Caco-2 (cell line): ENCODE measurements at regions of chr11 and their contacts with region 1.

Region 1: DNA sequence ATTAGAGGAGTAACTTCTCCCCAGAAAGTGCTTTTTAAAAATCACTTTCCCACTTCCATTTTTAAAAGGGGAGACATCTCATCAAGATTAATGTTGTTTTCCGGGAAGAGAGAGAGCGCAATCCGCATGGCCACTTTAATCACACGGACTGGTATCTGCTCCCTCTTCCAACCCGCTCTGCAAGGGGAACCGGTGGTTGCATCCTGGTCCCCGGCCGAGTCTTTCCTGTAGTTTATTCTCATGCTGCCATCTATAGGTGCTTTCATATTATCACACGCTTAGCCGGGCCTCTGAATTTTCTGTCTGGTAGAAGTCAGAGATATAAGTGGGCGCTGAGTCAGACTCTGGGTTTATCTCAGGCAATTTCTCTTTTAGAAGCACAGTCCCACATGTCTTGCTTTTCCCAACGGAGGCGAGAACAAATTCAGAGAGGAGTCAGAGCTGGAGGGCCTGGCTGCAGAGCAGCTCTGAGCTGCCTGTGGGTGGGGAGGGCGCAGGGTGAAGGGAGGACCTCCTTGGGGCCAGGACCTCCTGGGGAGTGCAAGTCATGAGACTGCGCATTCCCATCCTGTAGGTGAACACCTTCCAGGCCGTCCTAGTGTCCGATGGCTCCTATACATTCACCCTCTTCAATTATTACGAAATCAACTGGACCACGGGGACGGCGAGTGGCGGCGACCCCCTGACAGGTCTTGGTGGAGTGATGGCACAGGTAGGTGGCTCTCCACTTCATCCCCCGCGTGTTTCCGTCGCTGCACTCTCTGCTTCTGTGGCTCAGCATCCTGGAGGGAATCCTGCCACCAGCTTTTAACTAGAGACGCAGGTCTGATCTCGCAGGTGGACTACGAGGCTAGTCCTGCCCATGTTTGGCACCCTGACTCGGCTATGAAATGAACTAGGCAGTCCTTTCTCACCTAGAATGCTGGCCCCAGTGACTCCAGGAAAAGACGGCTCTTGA is 11.7 kb downstream of the TECTA start:
- DNase-seq: peak; percentile 78 to 80
- H3K4me3 ChIP-seq: no peak overlapping the region
- H3K4me3 Mint-ChIP-seq: no peak overlapping the region
- H3K27ac Mint-ChIP-seq: no peak overlapping the region
- H3K4me1 ChIP-seq: no peaks in the 10 kb centered on the region
- H3K4me1 Mint-ChIP-seq: no peaks in the 10 kb centered on the region
- H3K27me3 ChIP-seq: no peaks in the 10 kb centered on the region; the same call in 1 of the 2 replicates
- H3K27me3 Mint-ChIP-seq: peaks cover 14% of the 10 kb centered on the region
- CTCF ChIP-seq: peak; percentile 80 to 83

Region 2: GRCh38 chr11:120912504-120912903 is 200.3 kb before region 1 on chr11:
- CTCF ChIA-PET with region 1: no interaction called
- POLR2A ChIA-PET with region 1: no interaction called
- intact Hi-C with region 1: loop called (anchors 1 kb)
- DNase-seq: peak in 1 of 2 experiments; percentile 47
- H3K4me3 ChIP-seq: no peak overlapping the region
- H3K4me3 Mint-ChIP-seq: no peak overlapping the region
- H3K27ac Mint-ChIP-seq: no peak overlapping the region
- H3K4me1 ChIP-seq: peaks cover 4% of the 10 kb centered on the region; the same call in 1 of the 2 replicates
- H3K4me1 Mint-ChIP-seq: peaks cover 6% of the 10 kb centered on the region
- H3K27me3 ChIP-seq: 0 out of 2 replicates have a peak, but pooled peaks cover 3% of the 10 kb centered on the region
- H3K27me3 Mint-ChIP-seq: peaks cover 21% of the 10 kb centered on the region
- CTCF ChIP-seq: peak; percentile 62 to 78

Region 3: DNA sequence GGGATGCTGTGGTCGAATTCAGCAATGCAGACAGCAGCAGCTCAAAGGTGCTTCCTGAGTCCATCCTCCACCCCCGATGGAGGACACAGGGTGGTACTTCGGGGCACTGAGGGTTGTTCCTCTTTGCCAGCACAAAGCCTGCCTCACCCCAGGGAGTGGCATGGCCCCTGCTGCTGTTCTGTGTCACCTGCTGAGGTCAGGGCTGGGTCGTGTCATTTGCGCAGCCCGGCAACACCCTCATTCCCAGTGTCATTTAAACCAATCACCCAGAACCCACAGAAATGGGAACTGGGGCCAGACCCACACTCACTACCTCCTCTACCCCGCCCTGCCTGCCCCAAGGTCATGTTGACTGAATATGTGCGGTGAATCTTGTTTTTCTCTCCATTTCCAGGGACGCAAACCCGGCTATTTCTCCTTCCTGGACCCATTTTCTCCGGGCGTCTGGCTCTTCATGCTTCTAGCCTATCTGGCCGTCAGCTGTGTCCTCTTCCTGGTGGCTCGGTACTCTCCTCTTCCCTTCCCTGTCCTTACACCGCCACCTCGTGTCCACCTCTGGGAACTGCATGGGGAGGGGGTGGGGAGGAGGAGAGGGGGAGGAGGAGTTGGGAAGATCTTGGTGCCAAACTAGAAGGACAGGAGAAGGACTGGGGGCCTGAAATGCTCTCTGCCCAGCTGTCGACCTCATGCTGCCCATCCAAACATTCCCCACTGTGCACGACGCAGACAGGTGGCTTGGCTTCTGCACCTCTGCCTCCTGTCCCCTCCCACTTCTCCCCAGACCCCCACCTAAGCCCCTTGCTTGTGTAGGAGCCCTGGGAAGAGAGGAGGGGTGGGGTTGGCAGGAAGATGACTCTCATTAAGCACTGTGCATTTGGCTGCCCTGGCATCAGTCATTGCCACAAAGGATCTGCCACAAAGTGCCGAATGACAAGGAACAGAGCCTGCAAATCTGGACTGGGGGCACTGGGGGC is 160.0 kb before region 1 on chr11:
- CTCF ChIA-PET with region 1: no interaction called
- POLR2A ChIA-PET with region 1: no interaction called
- intact Hi-C with region 1: loop called (anchors 1 kb)
- DNase-seq: peak; percentile 91 to 93
- H3K4me3 ChIP-seq: peak overlapping the region; percentile 13; the same call in 1 of the 2 replicates
- H3K4me3 Mint-ChIP-seq: peak overlapping the region; percentile 67
- H3K27ac Mint-ChIP-seq: no peak overlapping the region
- H3K4me1 ChIP-seq: peaks cover 5% of the 10 kb centered on the region; the same call in 1 of the 2 replicates
- H3K4me1 Mint-ChIP-seq: peaks cover 7% of the 10 kb centered on the region
- H3K27me3 ChIP-seq: peaks cover 1% of the 10 kb centered on the region; the same call in 1 of the 2 replicates
- H3K27me3 Mint-ChIP-seq: peaks cover 10% of the 10 kb centered on the region
- CTCF ChIP-seq: peak; percentile 97 to 99

Region 4: GRCh38 chr11:120991830-120992686 is 120.7 kb before region 1 on chr11:
- CTCF ChIA-PET with region 1: no interaction called
- POLR2A ChIA-PET with region 1: no interaction called
- intact Hi-C with region 1: no loop called
- DNase-seq: no peak
- H3K4me3 ChIP-seq: no peak overlapping the region
- H3K4me3 Mint-ChIP-seq: no peak overlapping the region
- H3K27ac Mint-ChIP-seq: no peak overlapping the region
- H3K4me1 ChIP-seq: no peaks in the 10 kb centered on the region
- H3K4me1 Mint-ChIP-seq: no peaks in the 10 kb centered on the region
- H3K27me3 ChIP-seq: no peaks in the 10 kb centered on the region; the same call in 1 of the 2 replicates
- H3K27me3 Mint-ChIP-seq: peaks cover 16% of the 10 kb centered on the region
- CTCF ChIP-seq: no peak

Region 5: GRCh38 chr11:121032546-121032945 is 80.2 kb before region 1 on chr11:
- CTCF ChIA-PET with region 1: interaction called, 6 read pairs
- POLR2A ChIA-PET with region 1: no interaction called
- intact Hi-C with region 1: loop called (anchors 1 kb)
- DNase-seq: no peak
- H3K4me3 ChIP-seq: no peak overlapping the region
- H3K4me3 Mint-ChIP-seq: no peak overlapping the region
- H3K27ac Mint-ChIP-seq: no peak overlapping the region
- H3K4me1 ChIP-seq: no peaks in the 10 kb centered on the region
- H3K4me1 Mint-ChIP-seq: peaks cover 22% of the 10 kb centered on the region
- H3K27me3 ChIP-seq: no peaks in the 10 kb centered on the region
- H3K27me3 Mint-ChIP-seq: no peaks in the 10 kb centered on the region
- CTCF ChIP-seq: peak; percentile 26 to 48

Region 6: DNA sequence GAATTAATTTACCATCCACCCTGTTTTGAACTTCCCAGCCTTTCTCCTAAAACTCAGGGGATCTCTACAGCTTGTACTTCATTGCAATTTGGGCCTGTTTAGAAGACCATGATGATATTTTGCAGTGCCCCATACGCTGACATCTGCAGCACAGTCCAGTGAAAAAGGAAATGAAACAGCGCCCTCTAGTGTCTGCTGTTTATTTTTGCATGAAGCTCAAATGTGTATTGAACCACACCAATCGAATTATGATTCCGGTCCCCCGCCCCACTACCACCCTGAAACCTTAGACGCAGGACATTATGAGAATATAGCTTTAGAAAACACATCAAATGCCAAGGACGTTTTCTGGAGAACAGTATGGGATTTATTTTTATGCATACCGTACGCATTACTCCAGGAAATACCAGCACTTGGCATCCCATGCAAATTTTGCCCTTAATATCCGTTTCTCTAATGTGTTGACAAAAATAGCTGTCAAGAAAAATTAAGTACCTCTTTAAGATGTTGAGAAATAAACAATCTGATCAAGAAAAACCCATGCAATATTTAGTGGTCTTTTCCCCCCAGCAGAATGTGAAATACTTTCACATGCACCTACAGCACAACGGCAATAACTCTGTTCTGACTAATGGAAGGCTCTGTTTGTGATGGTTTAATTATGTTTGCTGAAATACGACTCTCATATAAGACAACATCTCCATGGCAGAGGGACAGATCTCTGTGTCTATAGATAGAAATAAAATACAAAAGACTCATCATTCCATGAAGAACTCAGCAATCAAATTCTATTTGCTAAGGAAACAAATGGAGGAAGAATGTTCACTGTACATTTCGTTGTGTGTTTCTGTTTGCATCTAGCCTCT is 82.2 kb after region 1 on chr11:
- CTCF ChIA-PET with region 1: no interaction called
- POLR2A ChIA-PET with region 1: no interaction called
- intact Hi-C with region 1: loop called (anchors 2 kb)
- DNase-seq: peak; percentile 58 to 84
- H3K4me3 ChIP-seq: no peak overlapping the region
- H3K4me3 Mint-ChIP-seq: no peak overlapping the region
- H3K27ac Mint-ChIP-seq: no peak overlapping the region
- H3K4me1 ChIP-seq: no peaks in the 10 kb centered on the region
- H3K4me1 Mint-ChIP-seq: no peaks in the 10 kb centered on the region
- H3K27me3 ChIP-seq: no peaks in the 10 kb centered on the region
- H3K27me3 Mint-ChIP-seq: peaks cover 24% of the 10 kb centered on the region
- CTCF ChIP-seq: peak; percentile 92 to 94